ENCODE measurements at regions of chr19 and their contacts with region 1.

Region 1: GRCh38 chr19:7925171-7925851 is 624 bp downstream of the CTXN1 start:
- DNase-seq: peak; percentile 64
- ATAC-seq: peak; percentile 59
- H3K4me3 ChIP-seq: peak overlapping the region in 1 of 3 experiments; percentile 55; a peak in 1 of 6 replicates
- H3K27ac ChIP-seq: no peak overlapping the region
- H3K4me1 ChIP-seq: peaks cover 8% of the 10 kb centered on the region
- H3K27me3 ChIP-seq: no peaks in the 10 kb centered on the region
- CTCF ChIP-seq: peak; percentile 93
- EP300 ChIP-seq: no peak
- POLR2A ChIP-seq: no peak
- RAD21 ChIP-seq: peak; percentile 89

Region 2: DNA sequence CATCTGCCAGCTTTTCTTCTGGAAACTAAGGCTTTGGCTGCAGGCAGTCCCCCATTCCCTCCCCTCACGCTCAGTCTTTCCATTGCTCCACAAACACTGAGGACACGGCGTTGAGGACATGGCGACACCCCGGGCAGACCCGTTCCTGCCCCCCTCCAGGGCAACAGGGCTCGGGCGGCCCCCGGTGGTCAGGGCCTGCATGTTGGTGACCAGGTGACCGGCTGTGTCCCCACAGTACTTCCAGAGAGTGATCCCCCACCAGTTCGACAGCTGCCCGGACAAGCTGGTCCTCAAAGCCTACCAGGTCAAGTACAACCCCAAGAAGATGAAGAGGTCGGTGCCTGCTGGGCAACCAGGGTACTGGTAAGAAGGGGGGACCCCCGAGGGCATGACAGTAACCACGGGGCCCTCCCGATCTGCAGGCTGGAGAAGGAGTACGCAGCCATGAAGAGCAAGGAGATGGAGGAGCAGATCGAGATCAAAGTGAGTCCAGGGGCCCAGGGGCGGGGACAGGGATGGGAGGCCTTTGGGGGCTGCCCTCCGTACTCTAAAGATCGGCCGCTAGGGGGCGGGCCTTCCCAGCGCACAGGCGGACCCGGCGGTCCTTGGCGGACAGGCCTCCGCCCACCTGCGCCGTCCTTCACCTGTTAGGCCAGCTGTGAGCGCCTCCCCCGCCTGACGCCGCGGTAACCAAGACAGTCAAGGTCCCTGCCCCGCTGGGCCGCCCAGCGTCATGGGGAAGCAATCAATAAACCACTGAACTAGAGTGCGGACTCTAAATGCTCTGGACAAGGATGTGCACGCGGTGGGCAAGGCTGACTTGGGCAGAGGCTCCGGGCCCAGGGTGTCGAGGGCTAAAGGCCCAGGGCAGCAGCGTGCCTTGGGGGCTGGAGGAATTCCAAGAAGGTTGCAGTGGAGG is 72.2 kb before region 1 on chr19:
- CTCF ChIA-PET with region 1: interaction called, 28 read pairs
- POLR2A ChIA-PET with region 1: interaction called, 19 read pairs
- in situ Hi-C with region 1: loop called (anchors 5 kb)
- intact Hi-C with region 1: loop called (anchors 2 kb)
- DNase-seq: peak; percentile 90
- ATAC-seq: peak; percentile 93
- H3K4me3 ChIP-seq: peak overlapping the region in 1 of 3 experiments; percentile 60; a peak in 3 of 6 replicates
- H3K27ac ChIP-seq: peak overlapping the region; percentile 58
- H3K4me1 ChIP-seq: peaks cover 24% of the 10 kb centered on the region
- H3K27me3 ChIP-seq: peaks cover 0 to 5% of the 10 kb centered on the region in 2 experiments; a peak in 2 of 5 replicates
- CTCF ChIP-seq: peak; percentile 93
- EP300 ChIP-seq: no peak; a peak in 1 of 4 replicates
- POLR2A ChIP-seq: no peak
- RAD21 ChIP-seq: peak; percentile 98

Region 3: GRCh38 chr19:7943444-7944176 is 18.3 kb after region 1 on chr19 and contains the start of gene TIMM44:
- CTCF ChIA-PET with region 1: no interaction called
- POLR2A ChIA-PET with region 1: interaction called, 85 read pairs
- in situ Hi-C with region 1: no loop called
- intact Hi-C with region 1: no loop called
- DNase-seq: peak; percentile 99
- ATAC-seq: peak; percentile 98
- H3K4me3 ChIP-seq: peak within 1 kb of the TSS; percentile 65 to 98 (median 91)
- H3K27ac ChIP-seq: peak within 1 kb of the TSS; percentile 90
- H3K4me1 ChIP-seq: peaks cover 38% of the 10 kb centered on the region
- H3K27me3 ChIP-seq: peaks cover 0 to 3% of the 10 kb centered on the region in 2 experiments; a peak in 1 of 5 replicates
- CTCF ChIP-seq: no peak
- EP300 ChIP-seq: no peak
- POLR2A ChIP-seq: peak; percentile 98 to 99
- RAD21 ChIP-seq: peak; percentile 59
- total RNA-seq, gene TIMM44: 71.5 and 72.6 TPM in 2 replicates

Region 4: DNA sequence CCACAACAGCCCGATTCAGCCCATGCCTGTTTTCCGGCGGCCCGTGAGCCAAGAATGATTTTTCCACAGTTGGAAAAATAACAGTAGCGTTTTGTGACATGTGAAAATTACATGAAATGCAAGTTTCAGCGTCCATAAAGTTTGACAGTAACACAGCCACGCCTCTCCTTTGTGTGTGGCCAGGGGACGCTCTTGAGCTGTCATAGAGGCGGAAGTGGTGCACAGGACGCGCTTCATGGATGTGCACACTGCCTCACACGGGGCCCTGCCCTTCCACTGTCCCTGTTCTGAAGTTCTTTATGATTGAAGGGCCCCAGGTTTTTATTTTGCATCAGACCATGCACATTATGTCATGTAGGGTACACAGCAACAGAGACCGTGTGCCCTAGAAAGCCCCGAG is 92.5 kb after region 1 on chr19:
- CTCF ChIA-PET with region 1: no interaction called
- POLR2A ChIA-PET with region 1: no interaction called
- in situ Hi-C with region 1: no loop called
- intact Hi-C with region 1: no loop called
- DNase-seq: peak; percentile 45
- ATAC-seq: peak; percentile 89
- H3K4me3 ChIP-seq: no peak overlapping the region
- H3K27ac ChIP-seq: no peak overlapping the region
- H3K4me1 ChIP-seq: peaks cover 36% of the 10 kb centered on the region
- H3K27me3 ChIP-seq: peaks cover 0 to 3% of the 10 kb centered on the region in 2 experiments; a peak in 1 of 5 replicates
- CTCF ChIP-seq: peak; percentile 87
- EP300 ChIP-seq: no peak
- POLR2A ChIP-seq: no peak
- RAD21 ChIP-seq: peak; percentile 62; the same call in 1 of the 2 replicates

Measured in HepG2 (cell line).